Gastrocnemius medialis (tissue), 4 donors: ENCODE measurements at regions of chrX and their contacts with region 1.

Region 1: DNA sequence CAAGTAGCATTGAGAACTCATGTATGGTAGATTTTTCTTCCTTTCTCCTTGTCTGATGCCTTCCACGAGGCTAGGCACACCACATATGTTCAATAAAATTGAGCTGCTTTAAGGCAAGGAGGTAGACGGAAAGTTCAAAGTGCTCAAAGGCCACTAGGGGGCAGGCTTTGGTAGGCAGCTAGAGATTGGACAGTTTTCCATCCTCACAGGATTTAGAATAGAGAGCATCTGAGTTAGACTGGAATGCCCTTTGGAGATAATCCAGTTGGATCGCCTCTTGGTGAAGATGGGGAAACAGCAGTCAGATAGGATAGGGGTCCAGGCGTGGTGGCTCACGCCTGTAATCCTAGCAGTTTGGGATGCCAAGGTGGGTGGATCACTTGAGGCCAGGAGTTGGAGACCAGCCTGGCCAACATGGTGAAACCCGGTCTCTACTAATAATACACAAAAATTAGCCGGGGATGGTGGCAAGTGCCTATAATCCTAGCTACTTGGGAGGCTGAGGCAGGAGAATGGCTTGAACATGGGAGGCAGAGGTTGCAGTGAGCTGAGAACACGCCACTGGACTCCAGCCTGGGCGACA is 30.4 kb downstream of the ELF4 start:
- DNase-seq: peak; percentile 20 to 44
- ATAC-seq: peak; percentile 72 to 90
- H3K4me3 ChIP-seq: no peak overlapping the region
- H3K27ac ChIP-seq: no peak overlapping the region
- H3K4me1 ChIP-seq: no peaks in the 10 kb centered on the region
- H3K27me3 ChIP-seq: no peaks in the 10 kb centered on the region
- CTCF ChIP-seq: peak; percentile 28 to 74 (median 62)
- POLR2A ChIP-seq: no peak

Region 2: DNA sequence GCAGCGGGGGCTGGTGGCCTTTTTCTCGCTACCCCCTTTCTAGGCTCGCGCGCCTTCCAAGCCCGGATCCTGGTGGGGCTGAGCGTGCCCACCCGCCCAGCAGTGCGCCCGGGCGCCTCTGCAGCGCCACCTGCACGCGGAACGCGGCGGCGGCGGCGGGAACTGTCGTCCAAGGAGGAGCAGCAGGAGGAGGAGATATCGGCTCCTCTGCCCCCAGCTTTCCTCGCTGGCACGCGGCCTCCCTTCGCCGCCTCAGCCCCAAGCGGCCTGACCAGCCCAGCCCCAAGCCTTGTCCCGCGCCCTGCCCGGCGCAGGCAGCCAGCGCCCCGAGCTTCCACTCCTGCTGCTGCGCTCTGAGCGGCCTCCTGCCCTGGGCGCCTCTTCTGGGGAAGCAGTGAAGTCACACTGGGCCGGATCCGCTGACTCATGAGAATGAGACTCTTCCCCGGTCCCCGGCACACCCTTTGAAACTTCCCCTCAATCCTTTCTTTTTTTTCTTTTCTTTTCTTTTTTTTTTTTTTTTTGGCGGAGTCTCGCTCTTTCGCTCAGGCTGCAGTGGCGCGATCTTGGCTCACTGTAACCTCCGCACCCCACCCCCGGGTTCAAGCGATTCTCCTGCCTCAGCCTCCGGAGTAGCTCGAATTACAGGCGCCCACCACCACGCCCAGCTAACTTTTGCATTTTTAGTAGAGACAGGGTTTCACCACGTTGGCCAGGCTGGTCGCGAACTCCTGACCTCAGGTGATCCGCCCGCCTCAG is 41.0 kb after region 1 on chrX:
- in situ Hi-C with region 1: no loop called
- intact Hi-C with region 1: loop called (anchors 2 kb)
- DNase-seq: peak in 1 of 2 donors; percentile 46
- ATAC-seq: peak; percentile 76 to 81
- H3K4me3 ChIP-seq: peak overlapping the region; percentile 35 to 62 (median 46)
- H3K27ac ChIP-seq: peak overlapping the region; percentile 42 to 69 (median 50)
- H3K4me1 ChIP-seq: peaks cover 4 to 5% of the 10 kb centered on the region in 2 donors
- H3K27me3 ChIP-seq: no peaks in the 10 kb centered on the region
- CTCF ChIP-seq: peak; percentile 42 to 68 (median 66)
- POLR2A ChIP-seq: no peak

Region 3: GRCh38 chrX:130130990-130131389 is 51.1 kb after region 1 on chrX:
- in situ Hi-C with region 1: no loop called
- intact Hi-C with region 1: no loop called
- DNase-seq: no peak
- ATAC-seq: no peak
- H3K4me3 ChIP-seq: no peak overlapping the region
- H3K27ac ChIP-seq: no peak overlapping the region
- H3K4me1 ChIP-seq: peaks cover 0 to under 1% of the 10 kb centered on the region in 2 donors
- H3K27me3 ChIP-seq: no peaks in the 10 kb centered on the region
- CTCF ChIP-seq: no peak
- POLR2A ChIP-seq: no peak

Region 4: GRCh38 chrX:130179579-130180215 is 99.8 kb after region 1 on chrX:
- in situ Hi-C with region 1: loop called in 1 of 4 experiments (anchors 10 kb)
- intact Hi-C with region 1: no loop called
- DNase-seq: no peak
- ATAC-seq: no peak
- H3K4me3 ChIP-seq: no peak overlapping the region
- H3K27ac ChIP-seq: no peak overlapping the region
- H3K4me1 ChIP-seq: no peaks in the 10 kb centered on the region
- H3K27me3 ChIP-seq: no peaks in the 10 kb centered on the region
- CTCF ChIP-seq: no peak
- POLR2A ChIP-seq: no peak

Region 5: DNA sequence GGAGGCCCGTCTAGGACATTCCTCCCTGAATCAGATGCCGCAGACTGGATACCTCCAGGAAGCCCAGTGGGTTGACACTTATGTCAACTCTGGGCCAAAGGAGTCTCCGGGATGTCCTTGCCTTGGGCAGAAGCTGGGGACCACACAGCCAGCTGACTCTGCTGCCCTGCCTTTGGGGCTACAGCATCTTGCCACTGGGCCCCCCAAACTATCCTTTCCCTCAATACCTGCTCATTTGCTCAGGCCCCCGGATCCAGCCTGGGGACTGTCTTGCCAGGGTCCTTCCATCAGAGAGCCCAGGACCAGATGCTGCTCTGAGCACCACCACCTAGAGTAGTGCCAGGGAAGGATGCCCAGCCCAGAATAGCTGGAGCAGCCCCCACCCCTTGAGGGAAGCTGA is 110.9 kb after region 1 on chrX:
- in situ Hi-C with region 1: loop called (anchors 5 to 10 kb)
- intact Hi-C with region 1: loop called (anchors 1 kb)
- DNase-seq: no peak
- ATAC-seq: no peak
- H3K4me3 ChIP-seq: no peak overlapping the region
- H3K27ac ChIP-seq: no peak overlapping the region
- H3K4me1 ChIP-seq: no peaks in the 10 kb centered on the region
- H3K27me3 ChIP-seq: no peaks in the 10 kb centered on the region
- CTCF ChIP-seq: no peak
- POLR2A ChIP-seq: no peak

Region 6: DNA sequence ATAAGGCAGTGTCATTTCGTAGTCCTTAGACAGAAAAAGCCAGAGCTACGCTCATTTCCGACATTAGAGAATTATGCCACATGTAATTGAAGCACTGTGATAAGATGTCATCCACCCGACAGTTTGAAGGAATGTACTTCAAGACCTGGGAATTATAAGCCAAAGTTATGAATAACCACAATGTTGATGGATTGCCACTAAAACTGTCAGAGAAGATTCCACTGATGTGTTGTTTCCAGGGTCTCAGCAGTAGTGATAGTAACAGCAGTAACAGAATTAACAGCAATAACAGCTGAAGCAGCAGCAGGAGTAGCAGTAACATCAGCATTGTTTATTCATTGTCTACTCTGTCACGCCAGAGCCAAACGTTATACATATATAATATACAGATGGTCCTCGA is 116.6 kb after region 1 on chrX:
- in situ Hi-C with region 1: loop called in 3 of 4 experiments (anchors 5 to 10 kb)
- intact Hi-C with region 1: loop called (anchors 1 kb)
- DNase-seq: no peak
- ATAC-seq: no peak
- H3K4me3 ChIP-seq: no peak overlapping the region
- H3K27ac ChIP-seq: no peak overlapping the region
- H3K4me1 ChIP-seq: no peaks in the 10 kb centered on the region
- H3K27me3 ChIP-seq: no peaks in the 10 kb centered on the region
- CTCF ChIP-seq: no peak
- POLR2A ChIP-seq: no peak